Tibial artery (tissue), 4 donors: ENCODE measurements at regions of chr14 and their contacts with region 1.

Region 1: DNA sequence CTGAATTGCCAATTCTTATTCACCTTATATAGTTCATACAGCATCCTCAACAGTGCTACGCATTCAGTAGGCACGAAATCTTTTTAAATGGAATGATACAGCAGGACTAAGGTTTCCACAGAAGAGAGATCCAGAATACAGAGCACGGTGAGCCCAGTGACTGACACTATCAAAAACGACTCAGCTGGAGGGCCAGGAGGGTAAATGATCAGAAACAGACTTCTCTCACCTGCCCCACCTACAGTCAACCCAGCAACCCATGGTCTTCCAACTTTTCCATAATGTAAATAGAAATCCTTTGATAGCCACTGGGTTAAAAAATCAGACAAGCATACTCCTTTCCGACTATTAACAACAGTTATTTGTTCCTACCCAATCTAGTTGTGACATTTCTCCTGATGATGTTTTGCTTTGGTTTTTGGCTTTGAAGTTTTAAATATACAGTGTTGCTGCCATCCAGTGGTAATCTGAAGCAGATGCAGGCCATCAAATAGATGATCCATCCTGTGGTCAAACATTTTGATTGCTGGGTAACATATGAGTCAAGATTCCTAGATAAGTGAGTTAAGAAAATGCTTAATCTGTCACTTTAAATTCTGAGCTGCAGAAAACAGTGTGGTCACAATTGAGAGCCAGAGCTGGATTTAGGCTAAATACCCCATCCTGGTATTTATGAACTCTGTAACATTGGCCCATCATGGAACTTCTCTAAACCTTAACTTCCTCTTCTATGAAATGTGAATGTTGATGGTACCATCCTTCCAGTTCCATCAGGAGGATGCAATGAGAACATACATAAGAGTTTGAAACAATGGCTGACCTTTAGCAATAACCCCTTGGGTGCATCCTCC is 42.0 kb downstream of the GPHB5 start:
- DNase-seq: no peak
- H3K4me3 ChIP-seq: no peak overlapping the region
- H3K27ac ChIP-seq: no peak overlapping the region
- H3K4me1 ChIP-seq: peaks cover 0 to 10% (median 0%) of the 10 kb centered on the region in 4 donors
- H3K27me3 ChIP-seq: no peaks in the 10 kb centered on the region
- CTCF ChIP-seq: peak; percentile 77 to 90

Region 2: GRCh38 chr14:63134801-63135200 is 141.9 kb before region 1 on chr14:
- intact Hi-C with region 1: no loop called
- DNase-seq: no peak
- H3K4me3 ChIP-seq: no peak overlapping the region
- H3K27ac ChIP-seq: no peak overlapping the region
- H3K4me1 ChIP-seq: no peaks in the 10 kb centered on the region
- H3K27me3 ChIP-seq: no peaks in the 10 kb centered on the region
- CTCF ChIP-seq: no peak

Region 3: DNA sequence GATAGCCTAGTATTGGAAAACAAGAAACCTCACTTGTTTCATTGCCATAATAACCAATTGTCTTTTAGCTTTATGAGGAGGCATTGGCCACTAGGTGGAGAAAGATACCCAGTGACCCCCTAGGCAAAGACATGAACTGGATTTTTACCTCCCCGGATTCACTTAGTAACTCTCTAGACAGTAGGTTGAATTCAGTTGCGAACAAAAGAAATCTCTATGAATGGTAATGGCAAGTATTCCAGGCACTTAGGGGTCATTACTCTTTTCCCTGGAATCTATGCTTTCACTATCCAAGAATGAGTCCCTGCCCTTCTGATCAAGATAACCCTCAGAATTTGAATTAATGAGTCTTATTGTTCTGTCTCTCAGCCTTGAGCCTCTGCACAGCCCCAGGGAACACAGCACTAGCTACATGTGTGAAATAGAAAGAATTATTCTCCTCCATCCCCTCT is 101.9 kb before region 1 on chr14:
- intact Hi-C with region 1: loop called (anchors 2 kb)
- DNase-seq: no peak
- H3K4me3 ChIP-seq: no peak overlapping the region
- H3K27ac ChIP-seq: no peak overlapping the region
- H3K4me1 ChIP-seq: peaks cover 0 to 7% (median 2%) of the 10 kb centered on the region in 4 donors
- H3K27me3 ChIP-seq: no peaks in the 10 kb centered on the region
- CTCF ChIP-seq: peak; percentile 58 to 67